ENCODE measurements at regions of chr6 and their contacts with region 1.

Region 1: DNA sequence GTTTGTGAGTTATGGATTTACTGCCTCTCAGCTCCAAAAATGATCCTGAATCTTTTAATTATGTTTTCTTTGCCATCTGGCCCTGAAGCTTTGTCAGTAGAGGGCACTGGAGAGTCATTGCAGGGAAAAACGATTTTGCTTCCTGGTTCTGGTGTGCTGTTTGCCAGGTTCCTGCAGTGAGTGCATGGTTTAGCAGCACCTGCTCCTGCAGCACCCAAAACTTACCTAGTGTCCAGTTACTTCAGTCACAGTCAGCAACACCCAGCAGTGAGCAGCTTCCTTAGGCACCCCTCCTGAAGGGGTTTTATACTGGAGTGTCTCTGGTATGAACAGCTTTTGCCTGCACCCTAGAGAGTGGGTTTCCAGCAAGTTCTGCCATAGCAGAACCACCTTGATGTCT is 6.0 kb upstream of the TRIM26 start:
- DNase-seq: peak in 1 of 2 experiments; percentile 59
- H3K4me3 ChIP-seq: no peak overlapping the region
- H3K27ac ChIP-seq: no peak overlapping the region
- H3K4me1 ChIP-seq: peaks cover 0 to under 1% (median 0%) of the 10 kb centered on the region in 4 experiments; a peak in 1 of 7 replicates
- H3K27me3 ChIP-seq: no peaks in the 10 kb centered on the region; a peak in 1 of 7 replicates
- CTCF ChIP-seq: peak; percentile 42 to 89 (median 76)
- EP300 ChIP-seq: no peak
- POLR2A ChIP-seq: no peak
- RAD21 ChIP-seq: peak; percentile 80 to 86

Region 2: GRCh38 chr6:30154709-30155519 is 64.3 kb before region 1 on chr6:
- CTCF ChIA-PET with region 1: no interaction called
- POLR2A ChIA-PET with region 1: no interaction called
- DNase-seq: no peak
- H3K4me3 ChIP-seq: no peak overlapping the region
- H3K27ac ChIP-seq: no peak overlapping the region
- H3K4me1 ChIP-seq: no peaks in the 10 kb centered on the region
- H3K27me3 ChIP-seq: peaks cover 0 to 4% (median 1%) of the 10 kb centered on the region in 4 experiments; a peak in 4 of 7 replicates
- CTCF ChIP-seq: no peak
- EP300 ChIP-seq: no peak
- POLR2A ChIP-seq: no peak
- RAD21 ChIP-seq: no peak

Region 3: DNA sequence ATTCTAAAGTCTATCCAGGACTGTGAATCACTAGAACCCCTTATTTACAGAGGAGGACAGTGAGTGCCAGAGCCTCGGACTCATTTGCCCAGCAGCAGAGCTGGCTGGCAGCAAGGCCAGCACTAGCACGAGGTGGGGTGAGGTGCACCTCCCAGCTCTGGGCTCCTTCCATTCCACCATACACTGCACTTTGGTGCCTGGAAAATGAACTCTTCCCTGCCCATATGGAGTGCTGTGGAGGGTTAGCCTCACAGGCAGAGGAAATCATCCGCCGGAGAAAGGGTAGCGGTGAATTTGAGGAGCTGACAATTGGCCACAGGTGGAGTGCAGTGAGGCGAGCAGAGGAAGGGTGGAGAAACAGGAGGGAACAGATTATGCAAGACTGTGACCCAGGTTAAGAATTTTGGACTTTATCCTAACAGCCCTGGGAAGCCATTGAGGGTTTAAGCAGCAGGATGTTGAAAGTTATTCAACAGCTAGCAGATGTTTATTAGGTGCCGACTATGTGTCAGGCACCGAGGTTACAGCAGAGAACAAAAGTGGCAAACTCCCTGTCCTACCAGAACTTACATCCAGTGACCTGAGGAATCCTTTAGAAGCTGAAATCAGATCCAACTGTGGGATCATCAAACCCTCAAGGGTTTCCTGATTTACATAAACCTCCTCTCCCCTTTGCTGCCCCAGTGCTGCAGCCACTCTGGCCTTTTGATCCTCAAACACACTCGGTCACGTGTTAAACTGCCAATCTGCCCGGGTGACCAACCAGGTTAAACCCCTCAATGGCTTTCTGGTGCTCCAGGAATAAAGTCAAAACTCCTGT is 12.2 kb before region 1 on chr6:
- CTCF ChIA-PET with region 1: interaction called, 20 read pairs
- POLR2A ChIA-PET with region 1: interaction called, 4 read pairs
- DNase-seq: no peak
- H3K4me3 ChIP-seq: no peak overlapping the region
- H3K27ac ChIP-seq: no peak overlapping the region
- H3K4me1 ChIP-seq: peaks cover 3 to 20% (median 12%) of the 10 kb centered on the region in 4 experiments
- H3K27me3 ChIP-seq: no peaks in the 10 kb centered on the region
- CTCF ChIP-seq: no peak
- EP300 ChIP-seq: no peak
- POLR2A ChIP-seq: 0 out of 3 replicates have a peak, but pooled peaks of 1 of the 2 experiments have one; percentile 18
- RAD21 ChIP-seq: no peak

Region 4: GRCh38 chr6:30238174-30238795 is 19.0 kb after region 1 on chr6:
- CTCF ChIA-PET with region 1: interaction called, 11 read pairs
- POLR2A ChIA-PET with region 1: no interaction called
- DNase-seq: no peak
- H3K4me3 ChIP-seq: no peak overlapping the region
- H3K27ac ChIP-seq: no peak overlapping the region
- H3K4me1 ChIP-seq: no peaks in the 10 kb centered on the region
- H3K27me3 ChIP-seq: no peaks in the 10 kb centered on the region
- CTCF ChIP-seq: peak in 2 of 3 experiments; percentile 48 to 68; a peak in 3 of 4 replicates
- EP300 ChIP-seq: no peak
- POLR2A ChIP-seq: no peak
- RAD21 ChIP-seq: peak; percentile 75 to 80

Measured in H1 (cell line).